MCF 10A (cell line): ENCODE measurements at regions of chrX and their contacts with region 1.

Region 1: DNA sequence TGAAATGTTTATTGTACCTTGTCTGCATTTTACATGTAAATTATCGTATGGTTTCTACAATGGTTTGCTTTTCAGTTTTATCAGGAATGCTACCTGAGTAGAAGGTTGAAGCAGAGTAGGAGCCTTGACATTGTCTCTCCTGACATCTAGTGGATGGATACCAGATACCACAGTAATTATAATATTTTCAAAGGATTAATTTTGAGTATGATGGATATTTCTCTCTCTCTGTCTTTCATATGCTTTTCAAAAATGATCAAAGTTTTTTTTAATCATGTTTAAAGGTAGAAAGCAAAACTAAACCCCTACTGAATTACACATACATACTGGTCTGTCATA is 109.4 kb upstream of the KLHL13 start:
- DNase-seq: peak; percentile 50
- H3K4me3 Mint-ChIP-seq: peak overlapping the region; percentile 55
- H3K27ac Mint-ChIP-seq: peak overlapping the region; percentile 77
- H3K4me1 Mint-ChIP-seq: peaks cover 14% of the 10 kb centered on the region
- H3K27me3 Mint-ChIP-seq: peaks cover 29% of the 10 kb centered on the region
- CTCF ChIP-seq: peak; percentile 53

Region 2: GRCh38 chrX:117996918-117997480 is 229.1 kb before region 1 on chrX:
- CTCF ChIA-PET with region 1: interaction called, 17 read pairs
- POLR2A ChIA-PET with region 1: interaction called, 12 read pairs
- intact Hi-C with region 1: loop called (anchors 1 kb)
- DNase-seq: peak; percentile 59
- H3K4me3 Mint-ChIP-seq: no peak overlapping the region
- H3K27ac Mint-ChIP-seq: no peak overlapping the region
- H3K4me1 Mint-ChIP-seq: peaks cover 17% of the 10 kb centered on the region
- H3K27me3 Mint-ChIP-seq: no peaks in the 10 kb centered on the region
- CTCF ChIP-seq: peak; percentile 54

Region 3: DNA sequence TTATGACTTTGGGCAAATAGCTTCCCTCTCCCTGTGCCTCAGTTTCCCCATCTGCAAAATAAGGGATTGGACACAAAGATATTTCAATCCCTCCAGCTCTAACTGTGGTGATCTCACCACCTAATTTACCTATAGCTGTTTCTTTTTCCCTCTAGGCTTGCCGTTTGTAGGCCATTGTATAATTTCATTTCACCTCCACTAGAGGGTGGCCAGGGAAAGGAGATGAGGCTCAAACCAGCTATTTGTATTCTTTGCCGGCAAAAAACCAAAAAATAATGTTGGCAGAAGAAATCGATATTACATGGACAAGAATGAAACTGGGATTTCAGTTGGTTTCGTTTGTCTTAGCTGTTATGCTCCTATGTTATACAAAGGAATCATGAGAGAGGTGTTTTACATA is 233.4 kb after region 1 on chrX:
- CTCF ChIA-PET with region 1: no interaction called
- POLR2A ChIA-PET with region 1: no interaction called
- intact Hi-C with region 1: no loop called
- DNase-seq: peak; percentile 51
- H3K4me3 Mint-ChIP-seq: no peak overlapping the region
- H3K27ac Mint-ChIP-seq: no peak overlapping the region
- H3K4me1 Mint-ChIP-seq: no peaks in the 10 kb centered on the region
- H3K27me3 Mint-ChIP-seq: no peaks in the 10 kb centered on the region
- CTCF ChIP-seq: peak; percentile 46